Activated CD4-positive, alpha-beta T cell treated with anti-CD3 and anti-CD28 coated beads, Interleukin-2, amount 10 ng/mL, durations not matched to agents 24 days and 14 days (primary cell): ENCODE measurements at regions of chr7 and their contacts with region 1.

Region 1: GRCh38 chr7:39732837-39733804 is 109.7 kb downstream of the RALA start:
- DNase-seq: peak; percentile 99
- H3K4me3 Mint-ChIP-seq: peak overlapping the region; percentile 90
- H3K27ac Mint-ChIP-seq: peak overlapping the region; percentile 92
- H3K4me1 Mint-ChIP-seq: peaks cover 30% of the 10 kb centered on the region
- H3K27me3 Mint-ChIP-seq: peaks cover 5% of the 10 kb centered on the region

Region 2: GRCh38 chr7:38908759-38909335 is 824.3 kb before region 1 on chr7 and contains the start of gene VPS41:
- intact Hi-C with region 1: loop called (anchors 10 kb)
- DNase-seq: peak; percentile 94
- H3K4me3 Mint-ChIP-seq: peak within 1 kb of the TSS; percentile 100
- H3K27ac Mint-ChIP-seq: peak within 1 kb of the TSS; percentile 98
- H3K4me1 Mint-ChIP-seq: peaks cover 24% of the 10 kb centered on the region
- H3K27me3 Mint-ChIP-seq: peaks cover 3% of the 10 kb centered on the region
- total RNA-seq, gene VPS41: 57.9 and 58.4 TPM in 2 replicates

Region 3: DNA sequence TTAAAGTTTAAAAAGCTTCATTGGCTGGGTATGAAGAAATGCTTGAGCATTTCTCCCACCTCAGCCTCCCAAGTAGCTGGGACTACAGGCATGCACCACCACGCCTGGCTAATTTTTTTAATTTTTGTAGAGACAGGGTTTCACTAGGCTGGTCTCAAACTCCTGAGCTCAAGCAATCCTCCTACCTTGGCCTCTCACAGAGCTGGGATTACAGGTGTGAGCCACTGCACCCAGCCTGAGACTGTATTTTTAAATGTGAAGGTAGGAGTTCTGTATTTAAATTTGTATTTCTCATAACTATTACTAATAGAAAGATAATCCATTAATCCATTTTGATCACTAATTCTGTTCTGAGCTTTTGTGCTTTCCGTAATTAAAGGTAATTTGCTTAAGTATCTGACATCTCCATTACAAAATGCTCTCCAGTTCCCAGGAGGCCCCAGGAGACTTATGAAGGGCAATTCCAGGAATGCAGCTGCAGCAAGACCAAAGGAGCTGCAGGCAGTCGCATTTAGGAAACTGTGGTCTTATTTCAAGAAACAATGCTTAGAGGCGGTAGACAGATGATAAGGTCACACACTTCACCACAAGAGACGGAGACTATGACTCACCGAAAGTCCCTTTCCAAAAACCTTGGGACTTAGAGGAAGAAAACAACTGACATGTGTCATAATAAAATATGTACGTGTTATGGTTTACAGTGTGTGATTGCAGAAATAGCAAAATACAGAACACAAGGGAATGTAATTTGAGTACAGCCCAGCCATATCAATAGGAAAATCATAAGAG is 143.6 kb before region 1 on chr7:
- intact Hi-C with region 1: loop called (anchors 1 kb)
- DNase-seq: peak; percentile 93
- H3K4me3 Mint-ChIP-seq: peak overlapping the region; percentile 73
- H3K27ac Mint-ChIP-seq: peak overlapping the region; percentile 93
- H3K4me1 Mint-ChIP-seq: peaks cover 38% of the 10 kb centered on the region
- H3K27me3 Mint-ChIP-seq: peaks cover 2% of the 10 kb centered on the region

Region 4: DNA sequence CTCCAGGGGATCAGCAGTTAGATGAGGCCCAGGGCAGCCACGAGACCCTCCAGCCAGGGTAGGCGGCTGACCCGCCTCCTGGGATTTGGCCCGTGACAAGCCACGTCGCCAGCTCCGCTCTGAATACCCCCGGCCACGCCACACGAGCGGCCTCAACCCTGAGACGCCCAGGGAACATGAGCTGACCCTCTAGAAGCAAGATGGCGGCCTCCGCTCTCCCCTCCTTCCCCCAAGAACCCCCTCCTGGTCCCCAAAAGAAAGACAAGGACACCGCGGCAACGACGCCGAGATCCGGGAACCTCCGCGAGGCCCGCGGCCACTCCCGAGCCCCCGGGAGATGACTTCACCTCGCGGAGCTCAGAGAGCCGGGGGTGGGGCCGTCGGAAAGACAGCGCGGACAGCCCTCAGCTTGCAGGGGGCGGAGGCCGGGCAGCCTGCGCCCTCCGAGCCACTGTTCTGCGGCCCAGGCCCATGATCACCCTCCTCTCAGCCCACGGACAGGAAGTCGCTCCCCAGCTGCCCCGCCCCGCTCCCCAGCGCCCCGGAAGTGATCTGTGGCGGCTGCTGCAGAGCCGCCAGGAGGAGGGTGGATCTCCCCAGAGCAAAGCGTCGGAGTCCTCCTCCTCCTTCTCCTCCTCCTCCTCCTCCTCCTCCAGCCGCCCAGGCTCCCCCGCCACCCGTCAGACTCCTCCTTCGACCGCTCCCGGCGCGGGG is 109.9 kb before region 1 on chr7 and contains the start of gene RALA:
- intact Hi-C with region 1: loop called (anchors 1 kb)
- DNase-seq: peak; percentile 97
- H3K4me3 Mint-ChIP-seq: peak within 1 kb of the TSS; percentile 99
- H3K27ac Mint-ChIP-seq: peak within 1 kb of the TSS; percentile 95
- H3K4me1 Mint-ChIP-seq: peaks cover 35% of the 10 kb centered on the region
- H3K27me3 Mint-ChIP-seq: peaks cover 2% of the 10 kb centered on the region
- total RNA-seq, gene RALA: 35.5 and 37.0 TPM in 2 replicates

Region 5: DNA sequence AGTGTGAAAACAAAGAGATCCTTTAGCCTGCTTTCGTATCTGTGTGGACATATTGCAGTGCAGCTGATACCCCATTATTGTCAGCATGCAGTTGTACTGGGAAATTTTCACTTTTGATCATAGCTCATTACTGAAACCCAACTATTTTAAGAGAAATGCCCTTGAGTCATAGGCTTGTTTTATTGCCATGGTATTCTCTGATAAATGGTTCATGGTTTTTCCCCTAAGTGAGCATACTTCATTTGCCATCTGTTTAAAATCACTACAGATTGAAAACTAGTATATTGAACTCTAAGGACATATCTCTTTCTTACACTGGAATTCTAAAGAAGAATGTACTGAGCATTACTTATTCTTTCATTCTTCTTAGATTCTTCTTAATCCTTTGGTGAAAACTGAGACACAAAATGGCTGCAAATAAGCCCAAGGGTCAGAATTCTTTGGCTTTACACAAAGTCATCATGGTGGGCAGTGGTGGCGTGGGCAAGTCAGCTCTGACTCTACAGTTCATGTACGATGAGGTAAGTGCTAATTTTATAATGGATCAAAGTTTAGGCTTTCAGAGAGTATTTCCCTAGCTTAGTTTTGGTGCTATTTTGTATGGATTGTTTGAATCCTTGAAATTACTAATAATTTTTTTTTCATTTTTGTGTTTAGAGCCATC is 46.7 kb before region 1 on chr7:
- intact Hi-C with region 1: loop called (anchors 2 kb)
- DNase-seq: no peak
- H3K4me3 Mint-ChIP-seq: no peak overlapping the region
- H3K27ac Mint-ChIP-seq: peak overlapping the region; percentile 30
- H3K4me1 Mint-ChIP-seq: peaks cover 10% of the 10 kb centered on the region
- H3K27me3 Mint-ChIP-seq: no peaks in the 10 kb centered on the region

Region 6: DNA sequence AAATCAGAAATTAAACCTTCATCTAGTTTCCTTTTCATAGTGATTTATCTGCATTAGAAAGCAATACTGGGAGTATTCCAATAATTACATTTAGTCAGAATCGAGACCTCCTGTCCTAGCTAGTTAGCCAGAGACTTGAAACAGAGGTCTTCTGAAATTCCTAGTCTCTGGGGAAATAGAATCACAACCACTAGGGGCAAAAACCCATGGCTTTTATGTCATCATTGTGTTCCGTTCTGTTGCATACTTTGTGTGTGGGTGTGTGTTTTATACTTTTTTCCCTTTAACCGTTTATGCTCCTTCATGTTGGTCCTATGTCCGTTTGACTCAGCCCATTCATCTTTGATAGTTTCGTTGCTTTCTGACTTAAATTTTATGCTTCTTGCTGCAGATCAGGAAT is 30.0 kb before region 1 on chr7:
- intact Hi-C with region 1: no loop called
- DNase-seq: no peak
- H3K4me3 Mint-ChIP-seq: no peak overlapping the region
- H3K27ac Mint-ChIP-seq: no peak overlapping the region
- H3K4me1 Mint-ChIP-seq: peaks cover 2% of the 10 kb centered on the region
- H3K27me3 Mint-ChIP-seq: no peaks in the 10 kb centered on the region

Region 7: GRCh38 chr7:39811161-39811614 is 78.1 kb after region 1 on chr7:
- intact Hi-C with region 1: no loop called
- DNase-seq: no peak
- H3K4me3 Mint-ChIP-seq: no peak overlapping the region
- H3K27ac Mint-ChIP-seq: no peak overlapping the region
- H3K4me1 Mint-ChIP-seq: no peaks in the 10 kb centered on the region
- H3K27me3 Mint-ChIP-seq: peaks cover 28% of the 10 kb centered on the region

Region 8: DNA sequence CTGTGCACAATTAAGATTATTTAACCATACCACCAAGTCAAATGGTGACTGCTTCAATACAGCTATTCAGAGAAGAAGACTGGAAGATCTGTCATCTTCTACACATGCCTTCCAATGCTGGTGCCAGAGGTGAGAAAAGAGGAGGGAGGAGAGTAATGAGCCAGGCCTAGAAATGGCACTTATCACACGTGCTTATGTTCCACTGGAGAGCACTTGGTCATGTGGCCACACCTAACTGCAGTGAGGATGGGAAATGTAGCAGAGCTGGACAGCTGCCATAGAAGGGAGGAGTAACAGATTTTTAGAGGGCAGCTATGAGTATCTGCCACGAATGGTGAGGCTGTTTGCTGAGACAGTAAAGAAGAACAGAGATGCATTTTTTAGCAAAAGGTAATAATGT is 324.2 kb after region 1 on chr7:
- intact Hi-C with region 1: loop called (anchors 10 kb)
- DNase-seq: no peak
- H3K4me3 Mint-ChIP-seq: no peak overlapping the region
- H3K27ac Mint-ChIP-seq: no peak overlapping the region
- H3K4me1 Mint-ChIP-seq: peaks cover 7% of the 10 kb centered on the region
- H3K27me3 Mint-ChIP-seq: no peaks in the 10 kb centered on the region

Region 9: GRCh38 chr7:40134428-40135316 is 401.6 kb after region 1 on chr7 and contains the starts of genes MPLKIP and SUGCT:
- intact Hi-C with region 1: loop called (anchors 5 kb)
- DNase-seq: peak; percentile 96
- H3K4me3 Mint-ChIP-seq: peak within 1 kb of the TSS; percentile 95
- H3K27ac Mint-ChIP-seq: peak within 1 kb of the TSS; percentile 94
- H3K4me1 Mint-ChIP-seq: peaks cover 11% of the 10 kb centered on the region
- H3K27me3 Mint-ChIP-seq: peaks cover 11% of the 10 kb centered on the region
- total RNA-seq, gene MPLKIP: 37.3 and 40.8 TPM in 2 replicates
- total RNA-seq, gene SUGCT: 0.91 and 1.0 TPM in 2 replicates